Left ventricle myocardium superior (tissue), 1 donor: ENCODE measurements at regions of chr4 and their contacts with region 1.

Region 1: GRCh38 chr4:21765810-21766407 is 182.7 kb downstream of the KCNIP4 start:
- DNase-seq: no peak
- ATAC-seq: peak; percentile 33

Region 2: DNA sequence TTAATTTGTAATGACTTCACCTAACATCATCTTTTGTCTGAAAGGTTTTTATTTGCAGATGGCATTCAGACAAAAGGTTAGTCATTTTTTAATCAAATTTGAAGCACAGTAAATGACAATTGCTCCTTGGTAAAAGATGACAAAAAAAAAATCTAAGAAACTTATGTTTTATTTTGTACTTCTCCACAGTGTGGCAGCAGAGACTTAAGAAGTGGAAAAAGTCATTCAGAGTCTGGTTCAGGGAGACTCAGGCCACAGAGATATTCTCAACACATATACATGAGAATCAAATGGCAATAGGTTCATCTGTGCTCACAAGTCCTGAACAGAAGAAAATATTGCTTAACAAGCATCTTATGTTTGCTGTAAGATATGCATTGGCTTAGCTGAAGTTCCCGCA is 253.6 kb before region 1 on chr4:
- intact Hi-C with region 1: loop called (anchors 2 kb)
- DNase-seq: no peak
- ATAC-seq: no peak